ENCODE measurements at regions of chr9 and their contacts with region 1.

Region 1: GRCh38 chr9:36328798-36329411 is 70.7 kb upstream of the GNE start:
- DNase-seq: peak in 1 of 2 donors; percentile 83
- ATAC-seq: peak; percentile 68 to 75 (median 71)
- H3K4me3 ChIP-seq: no peak overlapping the region
- H3K4me3 Mint-ChIP-seq: no peak overlapping the region
- H3K27ac ChIP-seq: no peak overlapping the region
- H3K27ac Mint-ChIP-seq: no peak overlapping the region
- H3K4me1 ChIP-seq: no peaks in the 10 kb centered on the region
- H3K4me1 Mint-ChIP-seq: no peaks in the 10 kb centered on the region
- H3K27me3 ChIP-seq: no peaks in the 10 kb centered on the region
- H3K27me3 Mint-ChIP-seq: no peaks in the 10 kb centered on the region
- CTCF ChIP-seq: peak; percentile 91

Region 2: DNA sequence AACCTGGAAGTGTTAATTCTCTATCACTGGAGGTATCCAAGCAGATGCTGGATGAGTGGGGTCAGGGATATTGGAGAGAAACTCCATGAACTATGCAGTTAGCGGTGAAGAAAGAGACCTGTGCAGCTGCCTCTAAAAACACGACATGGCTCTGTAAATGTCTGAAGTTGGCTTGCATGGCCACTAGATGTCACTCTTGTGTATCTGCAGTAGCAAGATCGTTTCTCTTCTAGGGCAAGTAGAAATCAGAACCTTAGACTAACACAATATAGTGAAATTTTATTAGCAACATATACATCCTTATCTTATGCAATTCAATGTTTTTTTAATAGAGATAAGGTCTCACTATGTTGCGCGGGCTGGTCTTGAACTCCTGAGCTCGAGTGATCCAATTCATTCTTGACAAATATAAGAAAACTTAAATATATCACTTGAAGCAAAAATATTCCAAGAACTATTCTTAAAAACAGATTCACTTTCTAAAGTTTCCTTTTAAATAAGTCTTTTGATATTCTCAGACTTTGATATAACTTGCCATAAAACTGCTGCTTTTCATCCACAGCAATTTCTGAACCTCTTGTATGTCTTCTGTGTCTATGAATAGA is 373.9 kb before region 1 on chr9:
- intact Hi-C with region 1: loop called (anchors 2 kb)
- DNase-seq: peak in 1 of 2 donors; percentile 84
- ATAC-seq: peak; percentile 73 to 83 (median 78)
- H3K4me3 ChIP-seq: no peak overlapping the region
- H3K4me3 Mint-ChIP-seq: no peak overlapping the region
- H3K27ac ChIP-seq: no peak overlapping the region
- H3K27ac Mint-ChIP-seq: no peak overlapping the region
- H3K4me1 ChIP-seq: no peaks in the 10 kb centered on the region
- H3K4me1 Mint-ChIP-seq: no peaks in the 10 kb centered on the region
- H3K27me3 ChIP-seq: peaks cover 2% of the 10 kb centered on the region
- H3K27me3 Mint-ChIP-seq: peaks cover 28 to 40% of the 10 kb centered on the region in 2 donors
- CTCF ChIP-seq: peak; percentile 81

Region 3: GRCh38 chr9:36250079-36250478 is 78.8 kb before region 1 on chr9:
- intact Hi-C with region 1: loop called (anchors 1 kb)
- DNase-seq: no peak
- ATAC-seq: no peak
- H3K4me3 ChIP-seq: no peak overlapping the region
- H3K4me3 Mint-ChIP-seq: no peak overlapping the region
- H3K27ac ChIP-seq: no peak overlapping the region
- H3K27ac Mint-ChIP-seq: peak overlapping the region in 1 of 2 donors; percentile 9
- H3K4me1 ChIP-seq: no peaks in the 10 kb centered on the region
- H3K4me1 Mint-ChIP-seq: peaks cover 0 to 12% of the 10 kb centered on the region in 2 donors
- H3K27me3 ChIP-seq: no peaks in the 10 kb centered on the region
- H3K27me3 Mint-ChIP-seq: no peaks in the 10 kb centered on the region
- CTCF ChIP-seq: no peak